Heart left ventricle (tissue), 16 donors: ENCODE measurements at regions of chr9 and their contacts with region 1.

Region 1: DNA sequence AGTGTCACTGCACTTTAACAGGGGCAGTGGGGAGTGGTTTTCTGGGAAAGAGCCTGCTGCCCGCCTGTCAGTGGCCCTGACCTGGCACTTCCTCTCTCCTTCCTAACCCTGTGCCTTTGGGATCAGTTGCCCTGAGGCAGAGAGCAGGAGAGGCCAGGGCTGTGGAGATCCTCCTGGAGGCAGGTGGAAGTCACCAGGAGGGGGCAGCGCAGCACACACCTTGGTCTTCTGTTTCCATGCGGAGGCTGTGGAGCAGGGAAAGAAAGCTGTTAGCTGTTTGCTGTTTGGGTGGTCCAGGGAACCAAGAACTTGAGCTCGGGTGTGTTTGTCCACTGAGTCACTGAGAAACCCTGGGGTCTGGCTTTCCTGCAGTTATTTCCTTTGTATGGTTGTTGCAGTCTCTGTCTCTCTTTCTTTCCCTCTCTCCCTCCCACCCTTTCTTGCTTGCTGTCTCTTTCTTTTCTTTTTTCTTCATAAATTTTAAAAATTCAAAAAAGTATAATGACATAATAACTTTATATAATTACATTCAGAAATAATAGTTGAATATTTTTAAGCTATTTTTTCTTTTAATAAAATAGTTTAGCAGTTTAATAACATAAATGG is 28.1 kb downstream of the NTRK2 start:
- DNase-seq: peak; percentile 47 to 79 (median 69)
- ATAC-seq: peak; percentile 64 to 86 (median 80)
- H3K4me3 ChIP-seq: no peak overlapping the region
- H3K27ac ChIP-seq: no peak overlapping the region
- H3K4me1 ChIP-seq: peaks cover 0 to 5% (median 0%) of the 10 kb centered on the region in 12 donors
- H3K27me3 ChIP-seq: no peaks in the 10 kb centered on the region
- CTCF ChIP-seq: peak; percentile 36 to 80 (median 68)
- POLR2A ChIP-seq: no peak

Region 2: DNA sequence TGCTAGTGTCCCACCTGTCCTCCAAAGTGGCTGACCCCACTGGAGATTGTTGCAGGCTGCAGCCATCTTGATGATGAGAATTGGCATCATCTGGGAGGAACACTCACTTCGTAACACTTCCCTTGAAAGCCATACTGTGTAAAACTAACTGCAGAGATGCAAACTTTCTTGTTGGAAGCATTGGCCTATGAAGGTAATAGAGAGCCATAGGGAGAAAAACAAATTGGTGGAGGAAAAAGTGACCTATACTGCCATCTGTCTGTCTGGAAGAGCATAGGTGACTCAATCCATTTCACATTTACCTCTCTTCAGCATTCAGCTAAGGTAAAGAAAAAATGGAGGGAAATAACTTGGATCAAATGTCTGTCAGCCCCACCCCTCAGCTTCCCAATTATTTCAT is 445.4 kb after region 1 on chr9:
- intact Hi-C with region 1: loop called in 5 of 10 experiments (anchors 10 kb)
- DNase-seq: no peak
- ATAC-seq: no peak
- H3K4me3 ChIP-seq: no peak overlapping the region
- H3K27ac ChIP-seq: no peak overlapping the region
- H3K4me1 ChIP-seq: no peaks in the 10 kb centered on the region
- H3K27me3 ChIP-seq: no peaks in the 10 kb centered on the region
- CTCF ChIP-seq: peak in 11 of 12 donors; percentile 20 to 54 (median 37)
- POLR2A ChIP-seq: no peak

Region 3: DNA sequence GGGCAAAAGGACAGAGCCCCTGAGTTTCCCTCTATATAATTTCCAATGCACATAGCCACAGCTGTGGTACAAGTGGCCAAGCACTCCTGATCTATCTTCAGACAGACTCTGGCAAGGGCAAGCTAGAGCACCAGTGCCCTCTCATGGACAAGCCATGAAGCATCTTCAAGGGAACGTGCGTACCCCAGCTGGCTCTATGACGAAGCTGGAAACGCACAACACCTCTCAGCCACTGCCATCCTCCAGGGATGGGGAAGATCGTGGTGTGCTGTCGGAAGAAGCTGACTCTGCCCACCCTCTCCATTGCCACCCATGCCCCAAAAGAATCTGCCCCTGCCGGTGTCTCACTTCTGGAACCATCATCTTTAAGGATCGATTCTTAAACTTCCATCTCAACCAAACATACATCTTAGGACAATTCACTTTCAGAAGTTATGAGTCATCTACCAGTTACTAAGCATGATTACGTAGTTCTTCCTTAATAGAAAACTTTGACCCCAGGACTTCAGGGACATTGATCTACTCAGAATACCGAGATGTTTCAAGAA is 561.3 kb after region 1 on chr9:
- intact Hi-C with region 1: loop called in 8 of 10 experiments (anchors 2 to 10 kb)
- DNase-seq: peak in 4 of 5 donors; percentile 22 to 53 (median 45)
- ATAC-seq: peak; percentile 77 to 88 (median 87)
- H3K4me3 ChIP-seq: no peak overlapping the region
- H3K27ac ChIP-seq: no peak overlapping the region
- H3K4me1 ChIP-seq: peaks cover 0 to 6% (median 0%) of the 10 kb centered on the region in 12 donors
- H3K27me3 ChIP-seq: peaks cover 0 to 7% (median 0%) of the 10 kb centered on the region in 9 donors
- CTCF ChIP-seq: peak; percentile 42 to 74 (median 67)
- POLR2A ChIP-seq: no peak

Region 4: GRCh38 chr9:85610074-85610860 is 912.7 kb after region 1 on chr9:
- intact Hi-C with region 1: loop called in 5 of 10 experiments (anchors 5 to 10 kb)
- DNase-seq: no peak
- ATAC-seq: peak in 3 of 4 donors; percentile 64 to 78 (median 73)
- H3K4me3 ChIP-seq: peak overlapping the region in 7 of 12 donors; percentile 5 to 46 (median 31)
- H3K27ac ChIP-seq: peak overlapping the region in 1 of 12 donors; percentile 18
- H3K4me1 ChIP-seq: peaks cover 0 to 7% (median 0%) of the 10 kb centered on the region in 12 donors
- H3K27me3 ChIP-seq: no peaks in the 10 kb centered on the region
- CTCF ChIP-seq: peak; percentile 69 to 90 (median 76)
- POLR2A ChIP-seq: no peak